ENCODE measurements at regions of chr14 and their contacts with region 1.

Region 1: GRCh38 chr14:75487155-75487671 is 35.1 kb upstream of the BATF start:
- DNase-seq: peak; percentile 56
- CTCF ChIP-seq: no peak

Region 2: DNA sequence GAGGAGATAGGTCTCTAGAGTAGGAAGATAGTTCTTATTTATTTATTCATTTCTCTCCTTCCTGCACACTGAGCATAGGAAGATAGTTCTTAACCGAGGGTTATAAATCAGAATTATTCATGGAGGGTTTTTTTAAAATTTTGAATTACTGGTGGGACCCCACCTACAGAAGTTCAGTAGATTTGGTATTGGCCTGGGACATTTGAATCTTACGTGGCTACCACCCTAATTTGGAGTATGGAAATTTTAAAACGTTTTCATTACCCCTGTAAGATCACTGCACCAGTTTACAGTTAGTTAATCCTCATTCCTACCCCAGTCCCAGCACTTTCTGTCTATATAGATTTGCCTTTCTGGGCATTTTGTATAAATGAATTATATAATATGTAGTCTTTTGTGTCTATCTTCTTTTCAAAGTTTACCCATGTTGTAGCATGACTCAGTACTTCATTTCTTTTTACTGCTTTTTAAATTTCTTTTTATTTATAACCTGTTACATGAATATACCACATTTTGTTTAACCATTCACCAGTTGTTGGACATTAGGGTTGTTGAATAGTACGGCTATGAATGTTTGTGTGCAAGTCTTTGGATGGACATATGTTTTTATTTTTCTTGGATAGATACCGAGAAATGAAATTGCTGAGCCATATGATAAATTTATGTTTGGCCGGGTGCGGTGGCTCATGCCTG is 679.2 kb before region 1 on chr14:
- CTCF ChIA-PET with region 1: no interaction called
- POLR2A ChIA-PET with region 1: no interaction called
- DNase-seq: no peak
- CTCF ChIP-seq: no peak

Region 3: DNA sequence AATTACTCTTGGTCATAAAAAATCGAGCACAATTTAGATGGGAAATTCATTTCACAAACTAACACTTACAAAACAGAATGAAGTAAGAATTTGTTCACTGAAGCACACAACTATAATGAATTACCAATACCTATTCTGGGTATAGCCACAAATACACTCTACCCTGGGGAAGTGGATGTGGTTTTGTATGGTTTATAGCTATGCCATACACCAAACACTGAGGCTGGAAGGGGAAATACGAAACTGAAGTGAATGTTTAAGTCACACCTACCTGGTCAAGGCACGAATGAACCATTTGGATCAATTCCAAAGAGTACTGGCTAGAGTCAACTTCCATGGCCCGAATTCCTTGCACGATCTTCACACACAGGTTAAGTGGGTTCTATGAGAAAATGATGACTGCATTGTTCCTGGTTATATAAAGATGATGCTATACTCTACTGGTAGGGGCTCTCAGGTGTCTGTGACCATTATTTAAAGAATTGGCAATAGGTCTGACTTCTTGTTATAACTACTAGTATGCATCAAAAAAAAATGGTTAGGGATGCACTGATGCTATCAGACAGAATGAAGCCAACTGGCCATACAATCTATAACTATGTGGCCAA is 373.2 kb before region 1 on chr14:
- CTCF ChIA-PET with region 1: no interaction called
- POLR2A ChIA-PET with region 1: no interaction called
- DNase-seq: no peak
- CTCF ChIP-seq: no peak

Region 4: GRCh38 chr14:75126679-75127473 is 360.3 kb before region 1 on chr14 and contains the start of gene NEK9:
- CTCF ChIA-PET with region 1: interaction called, 12 read pairs
- POLR2A ChIA-PET with region 1: no interaction called
- DNase-seq: peak; percentile 94
- CTCF ChIP-seq: no peak

Region 5: GRCh38 chr14:75452900-75453747 is 34.1 kb before region 1 on chr14:
- CTCF ChIA-PET with region 1: interaction called, 17 read pairs
- POLR2A ChIA-PET with region 1: no interaction called
- DNase-seq: no peak
- CTCF ChIP-seq: no peak

Region 6: GRCh38 chr14:75469606-75470237 is 17.5 kb before region 1 on chr14:
- CTCF ChIA-PET with region 1: interaction called, 11 read pairs
- POLR2A ChIA-PET with region 1: no interaction called
- DNase-seq: no peak
- CTCF ChIP-seq: no peak

Region 7: GRCh38 chr14:75514673-75515628 is 27.7 kb after region 1 on chr14:
- CTCF ChIA-PET with region 1: interaction called, 41 read pairs
- POLR2A ChIA-PET with region 1: no interaction called
- DNase-seq: peak; percentile 60
- CTCF ChIP-seq: no peak

Region 8: DNA sequence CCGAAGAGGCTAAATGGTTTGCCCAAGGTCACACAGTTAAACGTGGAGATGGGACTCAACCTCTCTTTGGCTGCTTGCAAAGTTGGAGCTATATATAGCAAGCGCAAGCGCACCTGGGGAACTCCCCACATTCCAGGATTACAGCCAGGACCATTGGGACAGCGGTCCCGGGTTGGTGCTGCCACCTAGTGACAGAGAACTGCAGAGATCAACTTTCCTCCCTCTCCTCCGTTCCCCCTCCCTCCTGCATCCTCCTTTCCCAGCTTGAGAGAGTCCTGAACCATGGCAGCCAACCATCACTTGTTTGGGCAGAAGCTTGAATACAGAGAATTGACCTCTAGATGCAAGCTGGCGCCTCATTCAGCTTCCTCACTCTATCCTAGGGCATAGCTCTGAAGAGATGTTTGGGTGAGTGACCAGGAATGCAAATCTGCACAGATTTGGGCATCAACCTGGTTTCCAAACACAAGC is 73.8 kb after region 1 on chr14:
- CTCF ChIA-PET with region 1: interaction called, 28 read pairs
- POLR2A ChIA-PET with region 1: no interaction called
- DNase-seq: peak; percentile 61
- CTCF ChIP-seq: peak; percentile 76